Heart right ventricle (tissue), 16 donors: ENCODE measurements at regions of chr4 and their contacts with region 1.

Region 1: DNA sequence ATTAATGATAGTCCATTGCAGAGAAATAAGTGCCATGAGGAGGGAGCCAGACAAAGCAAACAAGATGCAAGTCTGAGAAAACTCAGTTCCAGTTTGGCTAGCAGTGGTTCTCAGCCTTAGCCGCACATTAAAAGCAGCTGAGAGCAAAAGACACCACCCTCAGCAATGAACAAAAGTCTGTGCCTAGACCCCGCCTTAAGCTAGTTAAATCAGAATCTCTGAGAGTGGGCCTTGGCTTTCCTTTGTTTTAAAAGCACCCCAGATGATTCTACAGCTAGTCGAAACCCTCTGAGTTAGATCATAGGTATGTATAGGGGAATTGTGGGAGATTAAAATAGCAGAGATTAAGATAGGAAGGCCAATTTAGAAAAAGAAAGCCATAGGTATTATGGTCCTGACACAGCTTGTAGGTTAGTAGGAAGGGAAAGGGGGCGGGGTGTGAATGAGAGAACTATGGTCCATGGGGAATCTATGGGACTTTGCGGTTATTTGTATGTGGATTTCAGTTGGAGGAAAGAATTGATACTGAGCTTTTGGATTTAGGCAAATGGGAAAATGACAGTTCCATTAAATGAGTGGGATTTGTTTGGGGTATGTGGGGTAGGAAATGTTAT is 12.0 kb downstream of the SPRY1 start:
- DNase-seq: no peak
- ATAC-seq: peak in 5 of 8 donors; percentile 18 to 50 (median 39)
- H3K4me3 ChIP-seq: no peak overlapping the region
- H3K27ac ChIP-seq: peak overlapping the region in 6 of 10 donors; percentile 4 to 59 (median 18)
- H3K4me1 ChIP-seq: peaks cover 0 to 62% (median 15%) of the 10 kb centered on the region in 9 donors
- H3K27me3 ChIP-seq: no peaks in the 10 kb centered on the region
- CTCF ChIP-seq: no peak

Region 2: DNA sequence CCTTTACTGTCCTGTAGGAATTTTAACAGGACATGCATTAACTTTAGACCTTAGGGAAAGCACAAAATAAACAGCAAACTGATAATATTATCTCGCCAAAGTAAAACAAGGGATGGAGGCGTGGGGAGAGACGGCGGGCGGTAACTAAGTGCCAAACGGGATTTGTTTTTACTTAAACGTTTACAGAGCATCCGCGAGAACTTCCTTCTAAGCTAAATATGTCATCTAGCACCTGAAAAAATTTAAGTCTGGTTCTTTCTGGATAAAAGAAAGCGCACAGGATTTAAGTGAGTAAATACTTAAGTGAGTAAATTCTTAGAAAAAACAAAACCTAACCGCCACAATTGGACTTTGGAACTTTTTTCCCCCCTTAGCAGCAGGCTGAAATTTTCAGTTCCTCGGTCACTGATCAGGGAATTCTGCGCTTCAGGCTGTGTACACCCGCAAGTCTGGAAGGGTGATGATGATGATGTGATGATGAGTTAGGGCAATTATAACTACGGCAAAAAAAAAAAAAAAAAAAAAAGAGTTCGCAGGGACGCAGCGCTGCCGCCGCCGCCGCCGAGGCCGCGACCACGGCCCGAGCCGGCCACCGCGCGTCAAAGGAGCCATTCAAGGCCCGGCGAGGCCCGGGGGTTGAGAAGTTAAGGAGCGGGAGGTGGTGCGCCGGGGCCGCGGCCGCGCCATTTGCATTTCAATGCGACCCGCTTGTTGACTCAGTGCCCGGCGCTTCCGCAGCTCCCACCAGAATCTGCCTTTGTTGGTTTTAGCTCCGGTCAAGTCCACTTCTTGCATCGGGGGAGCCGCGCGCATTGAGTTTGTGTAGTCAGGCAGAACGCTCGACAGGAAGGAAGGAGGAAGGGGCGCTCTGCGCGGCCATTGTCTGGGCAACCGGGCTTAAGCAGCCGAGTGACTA is 96.8 kb after region 1 on chr4:
- intact Hi-C with region 1: loop called in 3 of 10 experiments (anchors 5 to 10 kb)
- DNase-seq: peak; percentile 52 to 56
- ATAC-seq: peak; percentile 60 to 86 (median 80)
- H3K4me3 ChIP-seq: peak overlapping the region; percentile 49 to 70 (median 62)
- H3K27ac ChIP-seq: peak overlapping the region; percentile 22 to 87 (median 76)
- H3K4me1 ChIP-seq: peaks cover 0 to 16% (median 5%) of the 10 kb centered on the region in 9 donors
- H3K27me3 ChIP-seq: peaks cover 0 to 17% (median 0%) of the 10 kb centered on the region in 7 donors
- CTCF ChIP-seq: no peak

Region 3: DNA sequence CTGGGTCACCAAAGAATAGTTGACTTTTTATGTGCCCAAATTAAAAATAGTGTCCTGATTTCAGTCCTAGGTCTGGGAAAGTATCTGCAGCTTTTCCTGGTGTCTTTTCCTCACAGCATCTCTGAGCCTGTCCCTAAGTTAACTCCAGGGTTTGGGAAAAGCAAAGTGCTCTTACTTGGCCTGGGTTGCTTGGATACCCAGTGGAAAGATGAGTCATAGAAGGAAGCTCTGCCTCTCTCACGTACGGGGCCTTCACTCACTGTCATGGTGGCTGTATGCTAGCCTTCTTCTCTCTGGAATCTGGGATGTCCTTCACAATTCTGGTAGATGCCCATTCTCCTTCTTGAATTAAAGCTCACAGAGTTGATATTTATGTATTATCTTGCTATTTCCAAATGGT is 696.6 kb after region 1 on chr4:
- intact Hi-C with region 1: loop called in 3 of 10 experiments (anchors 5 to 10 kb)
- DNase-seq: no peak
- ATAC-seq: peak in 3 of 8 donors; percentile 31 to 59 (median 51)
- H3K4me3 ChIP-seq: no peak overlapping the region
- H3K27ac ChIP-seq: no peak overlapping the region
- H3K4me1 ChIP-seq: no peaks in the 10 kb centered on the region
- H3K27me3 ChIP-seq: no peaks in the 10 kb centered on the region
- CTCF ChIP-seq: no peak